Brain microvascular endothelial cell (primary cell): ENCODE measurements at regions of chr1 and their contacts with region 1.

Region 1: GRCh38 chr1:117284399-117285215 is 73.9 kb upstream of the VTCN1 start:
- DNase-seq: peak; percentile 33
- H3K4me3 ChIP-seq: no peak overlapping the region
- H3K27ac ChIP-seq: no peak overlapping the region
- H3K27me3 ChIP-seq: no peaks in the 10 kb centered on the region
- CTCF ChIP-seq: peak; percentile 70

Region 2: DNA sequence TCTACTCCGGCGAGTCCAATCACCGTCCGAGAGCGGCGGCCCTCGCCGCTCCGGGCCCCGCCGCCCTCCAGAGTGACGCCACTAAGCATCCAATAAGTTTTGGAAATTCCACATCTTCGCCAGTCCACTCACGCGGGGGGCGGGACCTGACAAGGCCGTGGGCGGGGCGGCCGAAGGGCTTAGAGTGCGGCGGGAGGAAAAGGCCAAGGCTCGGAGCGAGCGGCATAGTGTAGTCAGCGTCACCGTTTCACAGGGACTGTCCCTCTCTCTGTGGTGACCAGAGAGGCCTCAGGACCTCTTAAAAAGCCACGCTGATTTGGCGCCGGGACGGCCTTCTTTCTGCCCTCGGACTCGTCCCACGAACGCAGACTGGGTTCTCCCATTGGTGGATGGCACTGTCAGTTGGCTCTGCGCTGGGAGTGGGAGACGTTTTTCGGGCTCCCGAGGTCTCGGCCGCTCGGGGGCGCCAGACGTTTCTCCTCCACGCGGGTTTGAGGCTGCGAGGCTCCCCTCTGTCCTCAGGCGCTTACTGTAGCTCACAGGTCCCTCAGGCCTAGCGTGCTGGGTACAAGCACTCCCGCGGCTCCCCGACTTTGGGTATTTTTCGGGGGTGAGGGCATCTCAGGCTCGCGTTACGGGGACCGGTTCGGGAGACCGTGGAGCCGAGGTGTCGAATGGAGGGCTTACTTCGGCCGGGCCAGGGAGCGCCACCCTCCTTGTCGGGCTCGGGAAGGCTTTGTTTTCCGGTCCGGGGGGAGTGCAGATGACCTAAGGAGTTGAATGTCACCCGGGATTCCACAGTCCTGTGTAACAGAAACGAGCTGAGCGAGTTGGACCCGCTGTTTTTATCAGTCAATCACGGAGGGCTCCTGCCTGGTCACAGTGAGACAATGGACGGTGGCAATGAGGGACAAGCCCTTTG is 162.6 kb before region 1 on chr1:
- in situ Hi-C with region 1: loop called (anchors 25 kb)
- DNase-seq: peak; percentile 96
- H3K4me3 ChIP-seq: peak overlapping the region; percentile 89
- H3K27ac ChIP-seq: peak overlapping the region; percentile 95
- H3K27me3 ChIP-seq: no peaks in the 10 kb centered on the region
- CTCF ChIP-seq: peak; percentile 92

Region 3: GRCh38 chr1:117605774-117606648 is 321.4 kb after region 1 on chr1 and contains the start of gene TENT5C:
- in situ Hi-C with region 1: no loop called
- DNase-seq: peak; percentile 93
- H3K4me3 ChIP-seq: peak within 1 kb of the TSS; percentile 66
- H3K27ac ChIP-seq: no peak within 1 kb of the TSS
- H3K27me3 ChIP-seq: peaks cover 11% of the 10 kb centered on the region
- CTCF ChIP-seq: no peak